ENCODE measurements at regions of chr22 and their contacts with region 1.

Region 1: GRCh38 chr22:36409911-36410756 is 22.4 kb upstream of the MYH9 start:
- H3K4me3 ChIP-seq: peak overlapping the region; percentile 42
- H3K27ac ChIP-seq: peak overlapping the region; percentile 78
- H3K4me1 ChIP-seq: peaks cover 5% of the 10 kb centered on the region; the same call in 1 of the 2 replicates
- CTCF ChIP-seq: peak; percentile 35; the same call in 1 of the 2 replicates

Region 2: DNA sequence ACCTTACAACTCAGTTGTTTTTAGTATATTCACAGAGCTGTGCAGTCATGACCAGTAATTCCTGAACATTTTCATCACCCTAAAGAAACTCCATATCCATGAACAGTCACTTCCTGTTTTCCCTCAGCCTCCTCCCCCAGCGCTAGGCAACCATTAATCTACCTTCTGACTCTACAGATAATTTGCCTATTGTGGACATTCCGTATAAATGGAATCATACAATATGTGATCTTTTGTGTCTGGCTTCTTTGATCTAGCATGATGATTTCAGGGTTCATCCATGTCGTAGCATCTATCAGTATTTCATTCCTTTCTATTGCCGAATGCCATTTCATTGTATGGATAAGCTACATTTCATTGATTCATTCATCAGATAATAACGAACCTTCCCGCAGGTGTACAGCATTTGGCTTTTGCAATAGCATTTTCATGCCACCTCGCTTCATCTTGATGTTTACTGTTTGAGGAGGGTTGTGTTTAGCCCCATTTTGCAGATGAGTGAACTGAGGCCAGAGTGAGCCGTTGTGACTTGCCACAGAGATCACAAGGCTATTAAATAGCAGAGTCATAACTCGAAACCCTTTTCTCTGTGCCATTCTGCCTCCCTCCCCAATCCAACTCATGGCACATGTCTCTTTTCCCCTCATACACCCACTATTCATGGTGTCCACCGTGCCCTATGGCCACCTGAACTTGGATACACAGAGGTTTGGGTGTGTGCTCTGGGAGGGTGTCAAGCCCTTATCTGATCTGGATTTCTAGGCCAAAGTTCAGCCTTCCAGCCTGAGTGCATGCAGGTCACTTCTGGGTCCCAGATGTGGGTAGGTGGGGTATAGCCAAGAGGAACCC is 11.3 kb before region 1 on chr22:
- CTCF ChIA-PET with region 1: interaction called, 4 read pairs
- POLR2A ChIA-PET with region 1: interaction called, 15 read pairs
- H3K4me3 ChIP-seq: no peak overlapping the region
- H3K27ac ChIP-seq: no peak overlapping the region
- H3K4me1 ChIP-seq: peaks cover 12% of the 10 kb centered on the region
- CTCF ChIP-seq: no peak

Region 3: DNA sequence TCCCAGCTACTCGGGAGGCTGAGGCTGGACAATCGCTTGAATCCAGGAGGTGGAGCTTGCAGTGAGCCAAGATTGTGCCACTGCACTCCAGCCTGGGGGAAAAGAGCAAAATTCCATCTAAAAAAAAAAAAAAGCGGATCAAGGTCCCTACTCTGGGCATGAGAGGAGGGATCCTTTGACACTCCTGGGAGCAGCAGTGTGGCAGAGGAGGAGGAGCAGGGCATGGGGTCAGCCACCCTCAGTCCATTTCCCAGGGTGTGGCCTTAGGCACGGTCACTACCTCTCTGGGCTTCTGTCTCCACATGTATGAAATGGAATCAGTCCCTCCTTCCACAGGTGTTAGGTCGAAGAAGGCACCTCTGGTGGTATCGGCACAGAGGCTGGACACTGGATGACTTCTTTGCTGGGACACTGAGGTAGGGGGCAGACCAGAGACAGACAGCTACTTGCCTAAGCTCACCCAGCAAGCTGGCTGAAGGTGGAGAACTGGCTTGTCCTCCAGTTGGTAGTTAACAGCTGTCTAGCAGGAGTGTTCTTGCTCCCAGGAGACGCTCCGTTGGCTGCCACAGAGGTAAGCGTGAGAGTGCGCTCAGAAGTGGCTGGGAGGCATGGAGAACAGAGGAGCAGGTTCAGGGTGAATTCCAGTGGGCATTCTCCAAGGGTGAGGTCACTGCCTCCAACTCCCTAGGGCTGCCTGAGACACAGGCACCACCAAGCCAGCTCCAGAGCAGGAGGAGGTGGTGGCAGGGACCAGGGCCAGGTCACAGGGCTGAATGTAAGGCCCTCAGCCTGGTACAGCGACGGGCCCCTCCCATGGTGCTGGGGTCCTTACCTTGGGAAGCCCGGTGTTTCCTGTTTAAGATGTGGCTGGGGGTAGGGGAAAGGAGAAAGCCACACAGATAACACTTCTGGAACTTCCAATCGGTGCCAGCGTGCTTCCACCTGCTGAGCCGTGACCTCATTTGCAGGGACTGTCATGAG is 51.8 kb after region 1 on chr22:
- CTCF ChIA-PET with region 1: interaction called, 3 read pairs
- POLR2A ChIA-PET with region 1: interaction called, 17 read pairs
- H3K4me3 ChIP-seq: no peak overlapping the region
- H3K27ac ChIP-seq: peak overlapping the region; percentile 8; the same call in 1 of the 2 replicates
- H3K4me1 ChIP-seq: peaks cover 18% of the 10 kb centered on the region
- CTCF ChIP-seq: no peak